WTC11 (cell line): ENCODE measurements at regions of chr17 and their contacts with region 1.

Region 1: GRCh38 chr17:44170499-44171201 is at the start of gene ASB16:
- DNase-seq: peak; percentile 28
- ATAC-seq: peak; percentile 60
- H3K4me3 Mint-ChIP-seq: no peak within 1 kb of the TSS
- H3K27ac Mint-ChIP-seq: no peak within 1 kb of the TSS
- H3K4me1 Mint-ChIP-seq: peaks cover 23% of the 10 kb centered on the region
- H3K27me3 Mint-ChIP-seq: no peaks in the 10 kb centered on the region; the same call in 1 of the 2 replicates
- CTCF ChIP-seq: no peak
- total RNA-seq, gene ASB16: 0.11 to 0.23 TPM (median 0.14 TPM) in 3 replicates

Region 2: DNA sequence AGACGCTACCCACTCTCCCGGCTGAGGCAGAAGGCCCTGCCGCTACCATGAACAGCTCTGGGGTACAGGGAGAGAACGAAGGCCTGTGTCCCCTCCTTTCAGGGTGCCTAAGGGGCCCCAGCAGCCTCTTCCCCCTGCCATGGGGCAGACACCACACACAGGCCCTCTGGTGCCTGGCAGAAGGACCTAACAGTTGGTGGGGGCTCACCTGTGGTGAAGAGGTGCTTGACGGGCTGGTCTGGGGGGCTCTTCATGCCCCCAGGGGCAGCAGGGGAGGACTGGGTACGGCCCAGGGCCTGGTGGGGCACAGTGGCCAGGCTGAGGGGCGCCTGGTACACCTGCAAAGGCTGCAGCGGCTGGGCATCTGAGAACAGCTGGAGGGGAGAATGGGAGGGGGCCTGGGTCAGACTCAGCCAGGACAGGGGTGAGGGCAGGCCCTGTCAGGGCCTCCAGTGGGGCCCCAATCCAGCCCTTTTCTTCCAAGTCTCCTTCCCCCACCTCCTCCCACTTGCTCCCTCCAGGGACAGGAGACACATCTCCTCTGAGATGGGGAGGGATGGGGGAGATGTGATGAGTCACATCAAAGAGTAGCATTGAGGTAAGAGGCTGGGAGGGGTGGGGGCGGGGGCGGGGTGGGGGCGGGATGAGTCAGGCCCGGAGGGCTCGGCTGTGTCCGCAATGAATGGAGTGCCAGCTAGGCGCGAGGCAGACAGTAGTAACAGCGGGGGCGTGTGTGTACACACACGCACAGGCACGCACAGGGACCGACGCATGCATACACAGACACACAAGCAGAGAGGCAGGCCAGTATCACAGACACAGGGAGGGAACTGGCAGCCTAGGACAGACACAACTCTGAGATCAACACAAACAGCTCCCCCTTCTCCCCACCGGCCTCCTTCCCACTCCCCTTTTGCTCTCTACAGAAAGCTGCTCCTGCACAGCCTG is 84.0 kb before region 1 on chr17:
- CTCF ChIA-PET with region 1: interaction called, 10 read pairs
- POLR2A ChIA-PET with region 1: interaction called, 3 read pairs
- DNase-seq: no peak
- ATAC-seq: peak; percentile 35
- H3K4me3 Mint-ChIP-seq: peak overlapping the region; percentile 55
- H3K27ac Mint-ChIP-seq: peak overlapping the region; percentile 97
- H3K4me1 Mint-ChIP-seq: peaks cover 27% of the 10 kb centered on the region
- H3K27me3 Mint-ChIP-seq: no peaks in the 10 kb centered on the region
- CTCF ChIP-seq: no peak

Region 3: DNA sequence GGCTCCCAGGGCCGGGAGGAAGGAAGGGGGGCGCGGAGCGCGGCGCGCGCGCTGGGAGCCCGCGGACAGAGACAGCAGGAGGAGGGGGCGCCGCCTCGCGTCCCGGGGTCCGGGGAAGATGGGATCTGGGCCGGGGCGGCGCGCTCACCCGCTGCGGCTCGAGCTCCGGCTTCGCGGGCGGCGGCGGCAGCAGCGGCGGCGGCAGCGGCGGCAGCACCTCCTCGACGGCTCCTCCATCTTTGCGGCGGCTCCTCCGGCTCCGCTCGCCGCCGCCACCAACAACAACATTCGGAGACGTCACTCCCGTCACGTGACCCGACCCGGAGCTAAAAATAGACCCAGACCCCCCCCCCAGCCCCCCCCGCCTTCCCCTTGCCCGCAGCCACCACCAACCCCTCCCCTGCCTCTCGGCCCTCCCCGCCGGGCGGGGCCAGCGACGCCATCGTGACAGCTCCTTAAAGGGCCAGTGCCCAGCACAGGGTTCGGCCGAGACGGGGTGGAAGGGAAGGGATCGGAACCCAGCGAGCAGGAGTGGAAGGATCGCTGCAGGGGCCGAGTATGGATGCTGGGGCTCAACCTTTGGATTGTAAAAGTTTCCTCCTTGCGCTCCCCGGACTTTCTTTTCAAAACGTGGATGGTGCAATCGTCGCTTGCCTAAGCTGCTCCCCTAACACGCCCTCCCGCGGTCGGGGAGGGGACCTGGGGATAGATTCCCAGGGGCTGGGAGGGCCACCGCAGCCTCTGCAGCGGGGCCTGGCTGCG is 47.1 kb before region 1 on chr17 and contains the start of gene HDAC5:
- CTCF ChIA-PET with region 1: interaction called, 44 read pairs
- POLR2A ChIA-PET with region 1: interaction called, 7 read pairs
- DNase-seq: peak; percentile 95
- ATAC-seq: peak; percentile 86
- H3K4me3 Mint-ChIP-seq: peak within 1 kb of the TSS; percentile 91
- H3K27ac Mint-ChIP-seq: peak within 1 kb of the TSS; percentile 97
- H3K4me1 Mint-ChIP-seq: peaks cover 38% of the 10 kb centered on the region
- H3K27me3 Mint-ChIP-seq: no peaks in the 10 kb centered on the region
- CTCF ChIP-seq: no peak; the same call in 1 of the 2 replicates
- total RNA-seq, gene HDAC5: 54.0 to 61.6 TPM (median 59.0 TPM) in 3 replicates

Region 4: GRCh38 chr17:44155488-44155887 is 15.2 kb before region 1 on chr17:
- CTCF ChIA-PET with region 1: interaction called, 39 read pairs
- POLR2A ChIA-PET with region 1: no interaction called
- DNase-seq: no peak
- ATAC-seq: no peak
- H3K4me3 Mint-ChIP-seq: no peak overlapping the region
- H3K27ac Mint-ChIP-seq: no peak overlapping the region
- H3K4me1 Mint-ChIP-seq: no peaks in the 10 kb centered on the region
- H3K27me3 Mint-ChIP-seq: no peaks in the 10 kb centered on the region
- CTCF ChIP-seq: no peak

Region 5: GRCh38 chr17:44331249-44331760 is 160.7 kb after region 1 on chr17:
- CTCF ChIA-PET with region 1: interaction called, 10 read pairs
- POLR2A ChIA-PET with region 1: no interaction called
- DNase-seq: peak; percentile 80
- ATAC-seq: peak; percentile 19
- H3K4me3 Mint-ChIP-seq: no peak overlapping the region
- H3K27ac Mint-ChIP-seq: no peak overlapping the region
- H3K4me1 Mint-ChIP-seq: peaks cover 17% of the 10 kb centered on the region
- H3K27me3 Mint-ChIP-seq: peaks cover 3% of the 10 kb centered on the region; the same call in 1 of the 2 replicates
- CTCF ChIP-seq: peak; percentile 76